Activated CD8-positive, alpha-beta memory T cell treated with anti-CD3 and anti-CD28 coated beads, Interleukin-2, amount 10 ng/mL, durations not matched to agents 7 days and 5 days (primary cell): ENCODE measurements at regions of chr15 and their contacts with region 1.

Region 1: DNA sequence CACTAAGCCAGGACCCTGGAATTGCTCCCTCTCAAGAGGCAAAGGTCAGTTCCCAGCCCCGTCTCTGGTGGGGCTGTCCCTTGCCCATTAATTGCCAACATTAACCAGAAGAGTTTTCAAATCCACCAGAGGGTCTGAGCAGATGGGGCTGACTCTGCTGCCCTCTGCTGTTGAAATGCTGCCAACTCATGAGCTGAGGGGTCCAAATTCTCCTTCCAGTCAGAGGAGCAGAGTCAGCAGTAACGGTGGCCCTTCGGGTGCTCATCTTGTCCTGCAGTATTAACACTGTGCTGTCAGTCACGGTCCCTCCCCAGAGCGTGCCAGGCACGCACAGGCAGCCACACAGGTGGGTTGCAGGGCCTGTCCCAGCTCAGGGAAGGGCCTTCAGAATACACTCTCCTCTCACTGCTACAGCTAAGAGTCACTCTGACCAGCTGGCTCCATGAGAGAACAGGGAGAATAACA is 10.7 kb upstream of the SPTBN5 start:
- DNase-seq: peak; percentile 80
- ATAC-seq: peak; percentile 92
- H3K4me3 Mint-ChIP-seq: no peak overlapping the region
- H3K27ac Mint-ChIP-seq: peak overlapping the region; percentile 74
- H3K4me1 Mint-ChIP-seq: peaks cover 18% of the 10 kb centered on the region
- H3K27me3 Mint-ChIP-seq: no peaks in the 10 kb centered on the region

Region 2: DNA sequence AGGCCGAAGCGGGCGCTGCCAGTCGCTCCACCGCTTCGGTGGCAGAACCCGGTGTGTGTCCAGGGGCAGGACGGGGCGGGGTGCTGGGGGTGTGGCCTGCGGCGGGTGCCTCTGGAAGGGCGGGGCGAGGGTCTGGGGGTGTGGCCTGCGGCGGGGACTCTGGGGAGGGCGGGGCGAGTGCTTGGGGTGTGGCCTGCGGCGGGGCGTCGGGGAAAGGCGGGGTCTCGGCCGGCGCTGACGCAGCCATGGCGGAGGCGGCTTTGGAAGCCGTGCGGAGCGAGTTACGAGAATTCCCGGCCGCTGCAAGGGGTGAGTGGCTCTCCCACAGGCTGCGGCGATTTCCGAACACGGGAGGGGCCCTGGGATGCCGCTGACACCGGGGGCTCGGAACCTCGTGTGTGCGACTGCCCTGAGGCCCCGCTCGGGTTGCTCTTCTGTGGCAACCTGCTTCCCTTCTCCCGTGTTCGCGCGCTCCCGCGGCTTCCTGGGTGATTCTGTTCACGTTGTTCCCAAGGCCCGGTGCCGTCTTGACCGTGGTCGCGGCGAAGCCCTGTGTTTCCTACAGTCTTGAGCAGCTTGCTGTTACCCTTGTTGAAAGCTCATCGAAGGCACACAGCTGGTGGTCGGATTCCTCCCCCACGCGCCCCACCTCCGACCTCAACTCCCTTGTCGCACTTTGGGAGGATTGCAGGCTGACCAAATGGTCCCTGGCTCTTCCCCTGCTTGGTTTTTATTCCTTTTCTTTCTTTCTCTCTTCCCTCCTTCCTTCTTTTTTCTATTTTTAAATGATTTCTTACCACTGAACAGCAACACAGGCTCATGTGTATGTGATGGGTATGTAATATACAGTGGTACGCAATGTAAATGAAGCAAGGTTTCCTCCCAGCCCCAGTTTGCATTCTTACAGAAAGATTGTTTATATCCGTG is 76.4 kb before region 1 on chr15 and contains the start of gene JMJD7:
- CTCF ChIA-PET with region 1: interaction called, 20 read pairs
- DNase-seq: peak; percentile 95
- ATAC-seq: peak; percentile 90
- H3K4me3 Mint-ChIP-seq: peak within 1 kb of the TSS; percentile 81
- H3K27ac Mint-ChIP-seq: peak within 1 kb of the TSS; percentile 71
- H3K4me1 Mint-ChIP-seq: peaks cover 41% of the 10 kb centered on the region
- H3K27me3 Mint-ChIP-seq: peaks cover 2% of the 10 kb centered on the region
- total RNA-seq, gene JMJD7: 12.0 to 21.9 TPM

Region 3: GRCh38 chr15:41870689-41871081 is 33.9 kb before region 1 on chr15:
- CTCF ChIA-PET with region 1: interaction called, 11 read pairs
- DNase-seq: peak; percentile 87
- ATAC-seq: peak; percentile 96
- H3K4me3 Mint-ChIP-seq: no peak overlapping the region
- H3K27ac Mint-ChIP-seq: peak overlapping the region; percentile 88
- H3K4me1 Mint-ChIP-seq: peaks cover 17% of the 10 kb centered on the region
- H3K27me3 Mint-ChIP-seq: no peaks in the 10 kb centered on the region